ENCODE measurements at regions of chr22 and their contacts with region 1.

Region 1: GRCh38 chr22:36065775-36066559 is 37.3 kb upstream of the RBFOX2 start:
- DNase-seq: peak; percentile 71
- ATAC-seq: peak; percentile 85
- H3K4me3 Mint-ChIP-seq: peak overlapping the region; percentile 77
- H3K27ac Mint-ChIP-seq: peak overlapping the region; percentile 75
- H3K4me1 Mint-ChIP-seq: peaks cover 11% of the 10 kb centered on the region
- H3K27me3 Mint-ChIP-seq: peaks cover 18% of the 10 kb centered on the region

Region 2: DNA sequence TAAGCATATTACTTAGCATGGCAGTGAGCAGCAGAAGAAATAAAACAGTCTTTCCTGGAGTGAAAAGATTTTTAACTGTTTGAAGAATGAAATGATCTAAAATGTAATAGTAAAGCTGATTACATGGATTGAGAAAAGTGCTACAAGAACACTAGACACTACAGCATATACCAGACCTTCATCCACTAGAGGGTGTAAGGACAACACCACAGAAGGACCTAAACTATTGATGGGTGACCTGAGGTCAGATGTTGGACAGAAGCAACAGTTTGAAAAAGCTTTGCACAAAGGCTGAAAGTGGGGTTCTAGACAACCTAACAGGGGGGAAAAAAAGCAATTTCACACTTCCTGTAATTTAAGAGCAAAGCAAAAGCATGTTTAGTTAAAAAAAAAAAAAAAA is 135.0 kb before region 1 on chr22:
- CTCF ChIA-PET with region 1: interaction called, 22 read pairs
- POLR2A ChIA-PET with region 1: no interaction called
- DNase-seq: no peak
- ATAC-seq: no peak
- H3K4me3 Mint-ChIP-seq: no peak overlapping the region
- H3K27ac Mint-ChIP-seq: no peak overlapping the region
- H3K4me1 Mint-ChIP-seq: no peaks in the 10 kb centered on the region
- H3K27me3 Mint-ChIP-seq: peaks cover 8% of the 10 kb centered on the region

Region 3: DNA sequence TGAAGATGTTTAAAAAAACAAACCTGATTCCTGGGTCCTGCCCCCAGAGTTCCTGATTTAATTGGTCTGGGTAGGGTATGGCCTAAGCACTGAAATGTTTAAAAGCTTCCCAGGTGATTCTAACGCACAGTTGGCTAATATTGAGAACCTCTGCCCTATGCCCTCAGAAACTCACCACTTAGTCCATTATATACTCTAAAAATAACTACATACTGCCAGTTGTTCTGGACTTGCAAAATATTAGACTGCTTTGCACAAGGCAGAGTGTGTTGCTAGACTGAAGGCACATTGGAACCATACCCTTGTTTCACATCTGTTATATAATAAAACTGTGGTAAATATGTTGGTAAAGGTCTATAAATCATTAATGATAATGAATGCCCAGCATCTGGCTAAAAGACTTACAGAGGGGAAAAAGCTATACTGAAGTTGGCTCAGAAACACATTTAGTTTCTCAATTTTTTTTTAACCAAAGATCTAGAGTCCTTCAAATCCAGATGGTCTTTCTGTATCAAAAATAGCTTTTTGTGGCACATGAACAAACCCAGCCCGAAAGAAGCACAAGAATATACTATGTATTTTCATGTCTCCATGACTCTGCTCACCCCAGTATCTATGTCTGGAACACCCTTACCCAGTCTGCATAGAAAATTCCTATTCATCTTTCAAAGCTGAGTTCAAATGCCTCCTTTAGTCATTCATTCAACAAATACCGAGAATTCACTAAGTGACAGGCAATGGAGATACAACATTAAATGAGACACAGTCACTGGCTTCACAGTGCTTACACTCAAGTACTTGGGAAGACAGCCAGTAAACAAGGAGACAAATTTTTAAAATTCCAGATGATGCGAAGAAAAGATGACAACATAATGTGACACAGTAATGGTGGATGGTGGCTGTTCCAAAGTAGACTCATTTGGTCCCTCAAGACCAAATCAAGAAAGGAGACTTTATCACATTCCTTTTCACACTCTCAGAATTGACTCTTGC is 81.5 kb before region 1 on chr22:
- CTCF ChIA-PET with region 1: interaction called, 12 read pairs
- POLR2A ChIA-PET with region 1: no interaction called
- DNase-seq: no peak
- ATAC-seq: no peak
- H3K4me3 Mint-ChIP-seq: no peak overlapping the region
- H3K27ac Mint-ChIP-seq: no peak overlapping the region
- H3K4me1 Mint-ChIP-seq: no peaks in the 10 kb centered on the region
- H3K27me3 Mint-ChIP-seq: peaks cover 36% of the 10 kb centered on the region

Region 4: GRCh38 chr22:36027579-36027934 is 38.4 kb before region 1 on chr22:
- CTCF ChIA-PET with region 1: interaction called, 14 read pairs
- POLR2A ChIA-PET with region 1: no interaction called
- DNase-seq: peak; percentile 35
- ATAC-seq: no peak
- H3K4me3 Mint-ChIP-seq: peak overlapping the region; percentile 71
- H3K27ac Mint-ChIP-seq: peak overlapping the region; percentile 13
- H3K4me1 Mint-ChIP-seq: peaks cover 19% of the 10 kb centered on the region
- H3K27me3 Mint-ChIP-seq: peaks cover 48% of the 10 kb centered on the region

Region 5: DNA sequence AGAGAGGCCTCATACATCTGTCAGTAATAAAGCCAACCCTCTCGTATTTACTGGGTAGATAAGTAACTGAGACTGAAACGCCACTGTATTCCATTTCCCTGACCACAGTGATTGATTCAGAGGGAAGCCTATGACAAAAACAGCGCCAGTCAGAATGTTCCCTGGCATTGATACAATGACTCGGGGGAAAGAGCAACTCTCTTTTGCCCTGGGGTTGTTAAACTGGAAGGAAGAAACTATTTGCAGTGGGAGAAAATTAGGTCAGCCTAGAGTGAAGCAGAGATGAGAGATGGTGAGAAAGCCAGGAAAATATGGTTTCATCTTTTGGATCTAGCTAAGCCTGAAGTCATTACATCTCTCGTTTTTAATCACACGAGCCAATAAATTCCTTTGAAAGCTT is 11.3 kb after region 1 on chr22:
- CTCF ChIA-PET with region 1: interaction called, 46 read pairs
- POLR2A ChIA-PET with region 1: no interaction called
- DNase-seq: no peak
- ATAC-seq: no peak
- H3K4me3 Mint-ChIP-seq: no peak overlapping the region
- H3K27ac Mint-ChIP-seq: no peak overlapping the region
- H3K4me1 Mint-ChIP-seq: peaks cover 4% of the 10 kb centered on the region
- H3K27me3 Mint-ChIP-seq: peaks cover 3% of the 10 kb centered on the region

Region 6: GRCh38 chr22:36123673-36124630 is 58.0 kb after region 1 on chr22:
- CTCF ChIA-PET with region 1: interaction called, 37 read pairs
- POLR2A ChIA-PET with region 1: no interaction called
- DNase-seq: peak; percentile 95
- ATAC-seq: peak; percentile 100
- H3K4me3 Mint-ChIP-seq: peak overlapping the region; percentile 51
- H3K27ac Mint-ChIP-seq: peak overlapping the region; percentile 78
- H3K4me1 Mint-ChIP-seq: peaks cover 17% of the 10 kb centered on the region
- H3K27me3 Mint-ChIP-seq: peaks cover 9% of the 10 kb centered on the region

Region 7: GRCh38 chr22:36180038-36180880 is 114.3 kb after region 1 on chr22:
- CTCF ChIA-PET with region 1: interaction called, 30 read pairs
- POLR2A ChIA-PET with region 1: no interaction called
- DNase-seq: peak; percentile 90
- ATAC-seq: peak; percentile 99
- H3K4me3 Mint-ChIP-seq: no peak overlapping the region
- H3K27ac Mint-ChIP-seq: no peak overlapping the region
- H3K4me1 Mint-ChIP-seq: peaks cover 4% of the 10 kb centered on the region
- H3K27me3 Mint-ChIP-seq: no peaks in the 10 kb centered on the region

Measured in activated CD8-positive, alpha-beta T cell treated with anti-CD3 and anti-CD28 coated beads, Interleukin-2, amount 10 ng/mL, durations not matched to agents 7 days and 5 days (primary cell).